ENCODE measurements at regions of chr1 and their contacts with region 1.

Region 1: GRCh38 chr1:8848663-8849386 is 29.7 kb downstream of the ENO1 start:
- DNase-seq: peak; percentile 94

Region 2: DNA sequence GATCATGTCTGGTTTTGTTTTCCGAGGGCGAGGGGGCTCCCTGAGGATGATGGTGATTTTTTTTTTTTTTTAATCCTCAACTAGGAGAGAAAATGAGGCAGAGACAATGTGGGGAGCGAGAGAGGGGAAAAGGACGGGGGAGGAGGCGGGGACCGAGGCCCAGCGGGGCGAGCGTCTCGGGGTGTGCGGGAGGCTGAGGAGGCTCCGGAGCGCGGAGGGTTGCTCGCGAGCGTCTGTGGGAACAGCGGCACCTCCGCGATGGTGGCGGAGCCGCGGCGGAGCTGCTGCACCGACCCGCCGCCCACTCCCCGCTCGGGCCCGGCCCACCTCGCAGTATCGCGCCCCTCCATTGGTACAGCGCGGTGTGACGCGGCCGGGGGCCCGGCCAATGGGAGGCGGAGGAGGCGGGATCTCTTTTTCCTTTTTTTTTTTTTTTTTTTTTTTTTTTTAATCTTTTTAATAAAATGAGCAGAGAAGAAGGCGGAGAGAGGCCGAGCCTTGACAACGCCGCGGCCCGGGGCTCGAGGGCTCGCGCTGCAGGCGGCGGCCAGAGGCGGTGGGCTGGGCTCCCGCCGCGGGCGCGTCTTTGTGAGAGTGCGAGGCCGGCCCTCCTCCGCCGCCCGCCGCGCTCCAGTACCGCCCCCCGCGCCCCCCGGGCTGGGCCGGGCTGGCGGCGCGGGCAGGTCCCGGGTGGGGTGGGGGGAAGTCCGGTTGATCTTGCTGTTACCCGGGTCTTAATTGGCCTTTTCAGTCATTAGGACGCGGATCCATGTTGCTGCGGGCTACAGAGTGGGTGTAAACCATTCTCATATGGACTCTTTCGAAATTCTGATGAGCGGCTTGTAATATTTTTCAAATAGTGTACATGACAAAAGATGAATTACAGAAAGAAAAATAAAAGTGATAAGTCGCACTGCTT is 31.2 kb before region 1 on chr1 and contains the start of gene RERE:
- intact Hi-C with region 1: loop called (anchors 5 kb)
- DNase-seq: peak; percentile 97
- total RNA-seq, gene RERE: 102 TPM